WTC11 (cell line): ENCODE measurements at regions of chr1 and their contacts with region 1.

Region 1: DNA sequence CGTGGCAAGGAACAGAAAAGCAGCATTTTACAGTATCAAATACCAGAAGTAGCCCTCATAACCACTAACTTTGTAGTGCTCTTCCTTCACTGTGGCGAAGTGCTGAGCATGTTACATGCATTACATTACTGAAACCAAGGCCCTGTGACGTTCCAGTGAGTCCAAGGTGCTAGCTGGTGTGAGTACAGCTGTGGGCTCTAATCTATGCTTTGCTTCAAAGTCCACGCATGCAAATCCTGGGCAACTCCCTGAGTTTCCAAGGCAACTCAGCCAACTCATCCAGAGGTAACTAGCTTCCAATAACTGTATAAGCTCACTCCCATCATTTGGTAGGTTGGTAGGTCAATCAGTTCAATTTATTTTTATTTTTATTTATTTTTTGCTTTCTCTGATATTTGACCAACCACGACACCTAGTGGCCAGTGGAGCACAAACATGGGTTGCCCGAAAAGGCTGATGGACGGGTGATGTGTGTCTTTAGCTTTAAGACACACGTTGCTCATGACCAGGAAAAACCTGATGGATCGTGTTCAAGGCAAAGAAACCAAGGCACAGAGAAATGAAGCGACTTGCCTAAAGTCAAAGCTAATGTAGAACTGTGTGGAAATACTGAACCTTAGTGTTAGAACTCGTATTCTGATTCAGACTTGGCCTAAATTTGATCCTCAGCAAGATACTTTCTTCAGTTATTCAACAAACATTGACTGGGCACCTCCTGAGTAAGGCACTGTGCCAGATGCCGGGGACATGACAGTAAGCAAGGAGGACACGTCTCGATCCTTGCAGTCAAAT is 73.0 kb downstream of the GNG12 start:
- DNase-seq: peak; percentile 60
- ATAC-seq: peak; percentile 75
- H3K4me3 Mint-ChIP-seq: no peak overlapping the region
- H3K27ac Mint-ChIP-seq: no peak overlapping the region
- H3K4me1 Mint-ChIP-seq: peaks cover 10% of the 10 kb centered on the region
- H3K27me3 Mint-ChIP-seq: no peaks in the 10 kb centered on the region; the same call in 1 of the 2 replicates
- CTCF ChIP-seq: peak; percentile 61

Region 2: GRCh38 chr1:67535474-67535873 is 224.8 kb before region 1 on chr1:
- CTCF ChIA-PET with region 1: interaction called, 98 read pairs
- POLR2A ChIA-PET with region 1: no interaction called
- DNase-seq: peak; percentile 80
- ATAC-seq: peak; percentile 80
- H3K4me3 Mint-ChIP-seq: no peak overlapping the region
- H3K27ac Mint-ChIP-seq: no peak overlapping the region
- H3K4me1 Mint-ChIP-seq: no peaks in the 10 kb centered on the region; the same call in 1 of the 2 replicates
- H3K27me3 Mint-ChIP-seq: peaks cover 6% of the 10 kb centered on the region; the same call in 1 of the 2 replicates
- CTCF ChIP-seq: peak; percentile 87

Region 3: DNA sequence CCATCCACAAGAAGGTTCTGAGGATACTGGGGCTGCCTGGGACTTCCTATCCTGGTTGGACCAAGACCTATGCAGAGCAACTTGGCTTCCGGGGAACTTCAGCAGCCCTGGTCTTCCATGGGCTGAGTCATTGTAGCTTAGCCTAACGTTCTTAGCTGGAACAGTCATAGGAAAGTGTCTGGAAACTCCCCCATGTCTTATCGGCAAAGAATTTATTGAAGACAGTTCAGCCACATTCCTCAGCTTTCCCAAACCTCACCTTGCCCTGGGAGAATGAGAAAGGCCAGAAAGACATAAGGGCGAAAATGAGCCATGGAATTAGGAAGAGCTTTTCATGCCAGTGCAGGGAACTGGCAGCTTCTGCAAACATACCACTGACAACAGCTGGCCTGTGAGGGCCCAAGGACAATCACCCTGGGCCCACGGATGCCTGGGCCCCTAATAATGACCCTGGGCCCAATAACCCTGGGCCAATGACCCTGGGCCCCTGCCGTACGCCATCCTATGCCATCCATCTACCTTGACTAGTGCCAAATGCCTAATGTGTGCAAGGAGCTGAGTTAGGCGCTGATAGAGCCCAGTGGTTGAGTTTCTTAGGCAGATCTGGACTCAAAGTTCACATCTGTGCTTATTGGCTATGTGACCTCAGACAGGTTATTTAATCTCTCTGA is 189.6 kb before region 1 on chr1:
- CTCF ChIA-PET with region 1: interaction called, 18 read pairs
- POLR2A ChIA-PET with region 1: no interaction called
- DNase-seq: no peak
- ATAC-seq: no peak
- H3K4me3 Mint-ChIP-seq: no peak overlapping the region
- H3K27ac Mint-ChIP-seq: no peak overlapping the region
- H3K4me1 Mint-ChIP-seq: peaks cover 8% of the 10 kb centered on the region
- H3K27me3 Mint-ChIP-seq: no peaks in the 10 kb centered on the region
- CTCF ChIP-seq: no peak

Region 4: GRCh38 chr1:67722292-67722944 is 37.8 kb before region 1 on chr1:
- CTCF ChIA-PET with region 1: interaction called, 20 read pairs
- POLR2A ChIA-PET with region 1: no interaction called
- DNase-seq: no peak
- ATAC-seq: no peak
- H3K4me3 Mint-ChIP-seq: no peak overlapping the region
- H3K27ac Mint-ChIP-seq: no peak overlapping the region
- H3K4me1 Mint-ChIP-seq: peaks cover 17% of the 10 kb centered on the region
- H3K27me3 Mint-ChIP-seq: no peaks in the 10 kb centered on the region
- CTCF ChIP-seq: no peak

Region 5: DNA sequence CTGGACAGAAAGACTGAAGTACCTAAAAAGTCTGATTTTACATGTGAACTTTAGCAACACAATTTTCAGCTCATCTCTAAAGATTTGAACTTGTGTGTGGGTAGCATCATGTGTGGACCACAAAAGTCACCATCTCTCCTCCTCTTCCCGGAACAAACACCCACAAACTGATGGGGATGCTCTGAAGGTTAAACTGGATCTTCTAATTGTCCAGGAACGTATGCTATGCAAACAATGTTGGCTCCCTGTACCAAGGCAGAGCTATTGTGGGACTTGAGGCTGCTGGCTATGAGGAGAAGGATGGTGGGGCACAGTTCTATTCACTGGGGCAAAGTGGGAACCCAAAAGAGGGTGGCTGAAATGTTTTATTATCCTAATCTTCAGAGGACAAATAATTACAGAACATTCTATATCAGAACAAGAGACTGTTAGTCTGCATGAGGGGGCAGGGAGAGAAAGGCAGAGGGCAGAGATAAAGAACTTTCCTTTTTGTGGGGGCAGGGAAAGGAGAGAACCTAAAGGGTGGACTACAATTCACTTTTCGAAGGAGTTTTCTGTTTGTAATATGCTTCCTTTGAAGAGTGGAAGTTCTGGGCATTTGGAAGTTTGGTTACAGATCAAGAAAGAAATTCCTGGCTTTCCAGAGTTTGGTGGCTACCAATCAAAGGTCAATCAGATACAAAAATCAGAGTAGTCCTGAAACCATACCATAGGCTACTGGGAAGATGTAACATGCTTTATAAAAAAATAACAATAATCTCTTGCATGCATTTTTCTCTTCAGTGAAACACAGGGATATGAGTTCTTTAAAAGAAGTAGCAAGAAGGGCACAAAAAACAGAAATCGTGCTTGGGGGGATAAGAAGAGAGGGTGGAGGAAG is 12.3 kb before region 1 on chr1:
- CTCF ChIA-PET with region 1: interaction called, 29 read pairs
- POLR2A ChIA-PET with region 1: no interaction called
- DNase-seq: no peak
- ATAC-seq: no peak
- H3K4me3 Mint-ChIP-seq: no peak overlapping the region
- H3K27ac Mint-ChIP-seq: no peak overlapping the region
- H3K4me1 Mint-ChIP-seq: peaks cover 96% of the 10 kb centered on the region
- H3K27me3 Mint-ChIP-seq: peaks cover 12% of the 10 kb centered on the region
- CTCF ChIP-seq: no peak

Region 6: GRCh38 chr1:67889953-67890567 is 129.8 kb after region 1 on chr1:
- CTCF ChIA-PET with region 1: no interaction called
- POLR2A ChIA-PET with region 1: no interaction called
- DNase-seq: no peak
- ATAC-seq: no peak
- H3K4me3 Mint-ChIP-seq: no peak overlapping the region
- H3K27ac Mint-ChIP-seq: peak overlapping the region; percentile 30; the same call in 1 of the 2 replicates
- H3K4me1 Mint-ChIP-seq: peaks cover 46% of the 10 kb centered on the region
- H3K27me3 Mint-ChIP-seq: no peaks in the 10 kb centered on the region
- CTCF ChIP-seq: no peak

Region 7: GRCh38 chr1:67991546-67991945 is 231.3 kb after region 1 on chr1:
- CTCF ChIA-PET with region 1: no interaction called
- POLR2A ChIA-PET with region 1: no interaction called
- DNase-seq: no peak
- ATAC-seq: no peak
- H3K4me3 Mint-ChIP-seq: no peak overlapping the region
- H3K27ac Mint-ChIP-seq: no peak overlapping the region
- H3K4me1 Mint-ChIP-seq: no peaks in the 10 kb centered on the region
- H3K27me3 Mint-ChIP-seq: no peaks in the 10 kb centered on the region
- CTCF ChIP-seq: no peak